Uterus (tissue), 4 donors: ENCODE measurements at regions of chr12 and their contacts with region 1.

Region 1: GRCh38 chr12:42129595-42130204 is 15.0 kb downstream of the GXYLT1 start:
- DNase-seq: peak in 1 of 2 donors; percentile 40
- H3K4me3 ChIP-seq: no peak overlapping the region
- H3K27ac ChIP-seq: no peak overlapping the region
- H3K4me1 ChIP-seq: no peaks in the 10 kb centered on the region
- H3K27me3 ChIP-seq: no peaks in the 10 kb centered on the region
- CTCF ChIP-seq: peak; percentile 79 to 89 (median 86)
- POLR2A ChIP-seq: no peak

Region 2: GRCh38 chr12:42332301-42333285 is 202.9 kb after region 1 on chr12:
- intact Hi-C with region 1: loop called (anchors 5 kb)
- DNase-seq: peak in 1 of 2 donors; percentile 28
- H3K4me3 ChIP-seq: no peak overlapping the region
- H3K27ac ChIP-seq: no peak overlapping the region
- H3K4me1 ChIP-seq: no peaks in the 10 kb centered on the region
- H3K27me3 ChIP-seq: no peaks in the 10 kb centered on the region
- CTCF ChIP-seq: peak; percentile 55 to 62 (median 62)
- POLR2A ChIP-seq: no peak